Activated naive CD8-positive, alpha-beta T cell treated with anti-CD3 and anti-CD28 coated beads, Interleukin-2, amount 10 ng/mL, durations not matched to agents 7 days and 5 days (primary cell): ENCODE measurements at regions of chr19 and their contacts with region 1.

Region 1: DNA sequence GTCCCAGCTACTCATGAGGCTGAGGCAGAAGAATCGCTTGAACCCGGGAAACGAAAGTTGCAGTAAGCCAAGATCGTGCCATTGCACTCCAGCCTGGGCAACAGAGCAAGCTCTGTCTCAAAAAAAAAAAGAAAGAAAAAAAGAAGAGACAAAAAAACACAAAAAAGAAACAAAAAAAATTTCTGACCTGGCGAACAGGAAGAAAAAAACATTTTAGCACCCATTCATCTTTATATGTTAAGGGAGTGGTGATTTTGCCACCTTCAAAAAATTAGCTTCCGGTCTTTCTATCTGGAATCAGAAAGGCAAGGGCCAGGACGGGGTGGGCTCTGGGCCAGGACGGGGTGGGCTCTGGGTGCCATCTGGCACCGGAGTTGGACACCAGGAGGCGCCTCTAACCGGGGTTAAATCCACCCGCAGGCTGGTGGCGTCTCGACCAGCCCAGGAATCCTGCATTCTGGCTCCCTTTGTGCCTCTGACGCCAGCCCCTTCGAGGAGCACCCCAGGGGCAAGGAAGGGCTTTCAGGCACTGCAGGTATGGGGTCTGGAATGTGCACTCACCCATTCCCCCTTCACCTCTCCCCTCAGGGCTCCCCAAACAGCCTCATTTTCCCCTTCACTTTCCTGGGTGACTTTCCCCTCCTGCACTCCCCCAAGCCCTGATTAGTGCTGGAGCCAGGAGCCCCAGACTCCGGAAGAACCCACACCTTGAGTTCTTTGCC is 10.4 kb upstream of the ZSWIM4 start:
- DNase-seq: peak; percentile 78
- ATAC-seq: peak; percentile 62
- H3K4me3 Mint-ChIP-seq: peak overlapping the region; percentile 72
- H3K27ac Mint-ChIP-seq: peak overlapping the region; percentile 74
- H3K4me1 Mint-ChIP-seq: peaks cover 24% of the 10 kb centered on the region
- H3K27me3 Mint-ChIP-seq: no peaks in the 10 kb centered on the region

Region 2: GRCh38 chr19:13774217-13775191 is 10.4 kb before region 1 on chr19 and contains the start of gene C19orf53:
- POLR2A ChIA-PET with region 1: interaction called, 14 read pairs
- DNase-seq: peak; percentile 84
- ATAC-seq: peak; percentile 95
- H3K4me3 Mint-ChIP-seq: peak within 1 kb of the TSS; percentile 96
- H3K27ac Mint-ChIP-seq: peak within 1 kb of the TSS; percentile 92
- H3K4me1 Mint-ChIP-seq: peaks cover 19% of the 10 kb centered on the region
- H3K27me3 Mint-ChIP-seq: no peaks in the 10 kb centered on the region
- total RNA-seq, gene C19orf53: 85.2 to 88.1 TPM

Region 3: DNA sequence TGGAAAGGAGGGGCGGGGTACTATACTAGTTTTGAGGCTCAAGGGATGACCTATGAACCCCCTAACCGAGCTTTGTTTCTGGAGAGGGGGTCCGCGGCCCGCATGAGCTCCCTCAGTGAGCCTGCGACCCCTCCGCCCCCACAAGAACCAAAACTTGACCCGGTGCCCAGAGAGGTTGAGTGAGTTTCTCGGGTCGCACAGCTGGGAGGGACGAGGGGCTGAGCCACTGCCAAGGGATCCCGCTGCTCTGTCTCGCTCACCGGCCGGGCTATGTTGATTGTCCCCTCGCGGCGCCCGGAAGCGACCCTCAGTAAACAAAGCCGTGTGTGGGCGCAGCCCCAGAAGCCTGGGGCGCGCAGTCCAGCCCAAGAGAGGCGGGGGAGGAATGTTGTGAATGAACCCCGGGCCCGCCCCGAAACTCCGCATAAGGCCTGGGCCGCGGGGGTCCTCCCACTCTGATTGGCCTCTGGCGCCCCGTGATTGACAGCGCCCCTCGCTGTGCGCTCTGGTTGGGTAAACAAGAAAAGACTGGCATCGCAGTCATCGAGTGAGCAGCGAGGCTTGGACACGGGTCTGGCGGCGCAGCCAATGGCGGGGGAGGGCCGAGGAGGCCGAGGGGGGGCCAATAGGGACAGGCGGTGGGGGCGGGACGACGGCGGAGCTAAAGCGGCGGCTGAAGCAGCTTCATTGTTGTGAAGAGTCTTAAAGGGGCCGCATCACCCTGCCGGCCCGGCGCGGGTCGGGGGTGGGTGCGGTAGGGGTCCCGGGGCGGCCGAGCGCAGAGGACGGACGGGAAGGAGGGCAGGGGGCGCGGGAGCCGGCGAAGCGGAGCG is 10.1 kb after region 1 on chr19 and contains the start of gene ZSWIM4:
- POLR2A ChIA-PET with region 1: interaction called, 13 read pairs
- DNase-seq: peak; percentile 92
- ATAC-seq: peak; percentile 99
- H3K4me3 Mint-ChIP-seq: peak within 1 kb of the TSS; percentile 99
- H3K27ac Mint-ChIP-seq: peak within 1 kb of the TSS; percentile 96
- H3K4me1 Mint-ChIP-seq: peaks cover 30% of the 10 kb centered on the region
- H3K27me3 Mint-ChIP-seq: no peaks in the 10 kb centered on the region
- total RNA-seq, gene ZSWIM4: 9.6 to 9.9 TPM

Region 4: GRCh38 chr19:13823256-13823655 is 38.4 kb after region 1 on chr19:
- POLR2A ChIA-PET with region 1: no interaction called
- DNase-seq: no peak
- ATAC-seq: no peak
- H3K4me3 Mint-ChIP-seq: no peak overlapping the region
- H3K27ac Mint-ChIP-seq: peak overlapping the region; percentile 7
- H3K4me1 Mint-ChIP-seq: peaks cover 4% of the 10 kb centered on the region
- H3K27me3 Mint-ChIP-seq: no peaks in the 10 kb centered on the region

Region 5: DNA sequence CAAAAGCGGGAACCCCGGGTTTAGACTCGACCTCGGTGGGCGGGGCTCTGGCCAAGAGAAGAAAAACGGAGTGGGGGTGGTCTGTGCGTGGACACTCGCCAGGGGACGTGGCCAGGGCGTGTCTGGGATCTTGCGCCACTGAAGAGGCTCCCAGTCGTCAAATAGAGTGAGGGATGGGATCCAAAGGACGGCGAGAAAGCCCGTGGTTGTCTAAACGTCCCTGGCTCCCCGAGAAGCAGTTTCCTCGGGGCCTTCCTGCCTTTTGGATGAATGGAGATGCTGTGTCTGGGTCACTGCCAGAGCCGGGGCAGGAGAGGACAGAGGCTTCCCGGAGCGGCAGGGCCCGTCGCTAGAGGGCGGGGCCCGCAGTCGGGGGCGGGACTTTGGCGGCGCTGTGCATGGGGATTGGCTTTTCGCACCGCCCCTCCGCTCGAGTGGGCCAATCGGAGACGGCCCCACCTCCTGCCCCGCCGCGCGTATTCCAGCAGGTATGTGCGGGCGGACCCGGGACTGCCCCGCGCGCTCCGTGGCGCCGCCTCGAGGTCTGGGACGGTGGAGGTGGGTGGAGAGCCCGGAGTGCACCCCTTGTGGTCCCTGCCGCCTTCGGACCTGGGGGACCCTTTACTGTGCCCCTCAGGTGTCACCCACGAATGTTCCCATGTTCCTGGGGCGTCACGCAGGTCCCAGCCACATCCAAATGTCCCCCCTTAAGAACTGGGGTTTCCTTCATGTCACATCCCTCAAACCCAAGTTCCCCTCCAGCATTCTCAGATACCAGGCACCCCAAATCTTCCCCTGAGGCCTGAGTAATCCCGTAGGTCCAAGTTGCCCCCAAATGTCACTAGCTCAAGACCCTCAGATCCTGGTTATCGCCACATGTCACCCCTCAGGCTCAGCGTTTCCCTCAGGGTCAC is 48.7 kb after region 1 on chr19:
- POLR2A ChIA-PET with region 1: interaction called, 81 read pairs
- DNase-seq: peak; percentile 96
- ATAC-seq: peak; percentile 69
- H3K4me3 Mint-ChIP-seq: peak overlapping the region; percentile 88
- H3K27ac Mint-ChIP-seq: peak overlapping the region; percentile 83
- H3K4me1 Mint-ChIP-seq: peaks cover 28% of the 10 kb centered on the region
- H3K27me3 Mint-ChIP-seq: no peaks in the 10 kb centered on the region

Region 6: DNA sequence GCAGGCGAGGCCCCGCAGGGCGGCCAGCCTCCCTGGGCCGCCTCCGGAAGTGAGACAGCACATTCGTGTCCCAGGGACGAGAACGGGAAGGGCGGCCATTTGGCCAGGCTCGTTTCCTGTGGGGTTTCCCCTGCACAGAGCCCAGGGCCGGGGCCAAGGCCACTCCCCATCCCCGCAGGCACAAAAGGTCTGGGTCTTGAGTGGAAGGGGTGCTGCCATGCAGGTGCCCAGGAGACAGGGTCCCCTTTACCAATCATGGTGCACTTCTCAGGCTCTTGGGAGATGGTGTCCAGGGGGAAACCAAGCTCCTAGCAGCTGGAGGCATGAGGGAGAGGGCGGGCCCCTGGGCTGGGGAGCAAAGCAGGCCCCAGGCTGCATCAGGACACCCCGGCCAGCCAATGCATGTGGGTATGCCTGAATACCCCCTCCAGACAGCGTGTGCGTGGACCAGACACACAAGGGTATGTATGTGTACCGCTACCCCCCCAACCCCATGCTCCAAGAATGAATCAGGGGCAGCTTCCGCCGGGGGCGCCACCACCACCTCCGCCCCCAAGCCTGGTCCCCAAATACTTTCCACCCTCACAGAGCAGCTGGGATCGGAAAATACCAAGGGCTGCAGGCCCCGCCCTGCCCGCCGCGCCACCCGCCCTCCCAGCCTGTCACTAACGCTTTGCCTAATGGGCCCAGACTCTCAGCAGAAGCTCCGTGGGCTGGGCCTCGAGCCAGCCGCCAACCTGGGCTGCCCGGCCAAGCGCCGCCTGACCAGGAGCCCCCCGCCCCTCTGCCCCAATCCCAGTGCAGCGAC is 54.4 kb after region 1 on chr19:
- POLR2A ChIA-PET with region 1: interaction called, 81 read pairs
- DNase-seq: peak; percentile 82
- ATAC-seq: peak; percentile 42
- H3K4me3 Mint-ChIP-seq: peak overlapping the region; percentile 95
- H3K27ac Mint-ChIP-seq: peak overlapping the region; percentile 96
- H3K4me1 Mint-ChIP-seq: peaks cover 28% of the 10 kb centered on the region
- H3K27me3 Mint-ChIP-seq: no peaks in the 10 kb centered on the region

Region 7: GRCh38 chr19:13846557-13847406 is 61.9 kb after region 1 on chr19:
- POLR2A ChIA-PET with region 1: interaction called, 53 read pairs
- DNase-seq: peak; percentile 93
- ATAC-seq: peak; percentile 53
- H3K4me3 Mint-ChIP-seq: peak overlapping the region; percentile 78
- H3K27ac Mint-ChIP-seq: peak overlapping the region; percentile 96
- H3K4me1 Mint-ChIP-seq: peaks cover 35% of the 10 kb centered on the region
- H3K27me3 Mint-ChIP-seq: no peaks in the 10 kb centered on the region